K562 (cell line): ENCODE measurements at regions of chr21 and their contacts with region 1.

Region 1: DNA sequence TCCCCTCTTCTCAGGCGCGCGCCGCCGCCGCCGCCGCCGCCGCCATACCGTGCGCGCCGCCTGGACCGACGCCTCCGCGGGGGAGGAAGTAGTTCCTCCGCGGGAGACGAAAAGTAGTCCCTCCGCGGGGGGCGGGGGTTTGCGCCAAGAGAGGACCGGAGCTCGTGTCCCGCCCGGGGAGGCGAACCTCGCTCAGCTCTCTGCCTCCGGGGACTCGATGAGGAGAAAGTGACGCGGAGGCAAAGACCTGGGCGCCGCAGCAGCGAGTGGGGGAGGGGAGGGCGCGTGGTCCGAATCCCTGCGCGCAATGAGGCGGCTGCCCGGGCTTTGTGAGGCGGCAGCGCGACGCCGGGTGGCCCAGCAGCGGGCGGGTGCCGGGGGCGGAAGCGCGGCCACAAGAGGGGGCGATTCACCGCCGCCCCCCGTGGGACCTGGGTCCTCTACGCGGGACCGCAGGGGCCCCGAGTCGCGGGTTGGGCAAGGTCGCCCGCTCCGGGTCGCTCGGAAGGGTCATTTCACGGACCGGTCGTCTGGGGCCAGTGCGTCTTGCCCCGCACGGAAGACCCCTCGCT is at the start of gene BRWD1:
- DNase-seq: peak; percentile 91 to 93 (median 92)
- ATAC-seq: peak; percentile 71
- H3K4me3 ChIP-seq: peak within 1 kb of the TSS; percentile 62
- H3K27ac ChIP-seq: peak within 1 kb of the TSS; percentile 97
- H3K4me1 ChIP-seq: peaks cover 29 to 42% of the 10 kb centered on the region in 2 experiments
- H3K27me3 ChIP-seq: no peaks in the 10 kb centered on the region
- CTCF ChIP-seq: peak; percentile 54 to 76 (median 71)
- EP300 ChIP-seq: peak; percentile 43
- POLR2A ChIP-seq: peak; percentile 89
- RAD21 ChIP-seq: peak; percentile 75 to 83
- polyA plus RNA-seq, gene BRWD1: 10.1 to 11.2 TPM

Region 2: GRCh38 chr21:39183237-39184007 is 130.2 kb before region 1 on chr21 and contains the start of gene PSMG1:
- CTCF ChIA-PET with region 1: no interaction called
- POLR2A ChIA-PET with region 1: interaction called, 6 read pairs
- in situ Hi-C with region 1: no loop called
- intact Hi-C with region 1: loop called (anchors 10 kb)
- DNase-seq: peak; percentile 95 to 99 (median 96)
- ATAC-seq: peak; percentile 92
- H3K4me3 ChIP-seq: peak within 1 kb of the TSS; percentile 82
- H3K27ac ChIP-seq: peak within 1 kb of the TSS; percentile 93
- H3K4me1 ChIP-seq: peaks cover 8 to 11% of the 10 kb centered on the region in 2 experiments; a peak in 4 of 5 replicates
- H3K27me3 ChIP-seq: no peaks in the 10 kb centered on the region
- CTCF ChIP-seq: no peak
- EP300 ChIP-seq: no peak
- POLR2A ChIP-seq: peak; percentile 97
- RAD21 ChIP-seq: no peak
- polyA plus RNA-seq, gene PSMG1: 54.5 to 88.1 TPM

Region 3: GRCh38 chr21:39217356-39218081 is 96.1 kb before region 1 on chr21:
- CTCF ChIA-PET with region 1: no interaction called
- POLR2A ChIA-PET with region 1: no interaction called
- in situ Hi-C with region 1: no loop called
- intact Hi-C with region 1: no loop called
- DNase-seq: no peak
- ATAC-seq: no peak
- H3K4me3 ChIP-seq: no peak overlapping the region
- H3K27ac ChIP-seq: no peak overlapping the region
- H3K4me1 ChIP-seq: no peaks in the 10 kb centered on the region
- H3K27me3 ChIP-seq: no peaks in the 10 kb centered on the region
- CTCF ChIP-seq: no peak
- EP300 ChIP-seq: no peak
- POLR2A ChIP-seq: no peak
- RAD21 ChIP-seq: no peak

Region 4: DNA sequence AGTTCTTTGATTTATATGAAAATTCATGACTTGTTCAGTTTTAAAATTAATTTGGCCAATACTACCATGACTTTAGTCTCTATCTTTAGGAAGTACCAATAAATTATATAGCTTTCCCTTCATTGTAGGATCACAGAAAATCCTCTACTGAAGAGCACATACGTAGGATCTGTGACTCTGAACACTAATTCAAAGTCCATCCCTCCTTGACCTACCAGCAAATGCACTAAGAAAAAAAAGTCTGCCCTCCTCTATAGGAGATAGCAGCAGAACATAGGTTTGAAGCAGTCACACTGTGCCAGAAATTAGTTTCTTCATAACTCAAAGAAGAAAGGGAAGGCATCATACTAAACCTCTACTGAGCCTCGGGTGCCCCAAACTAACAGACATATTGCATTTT is 16.8 kb before region 1 on chr21:
- CTCF ChIA-PET with region 1: no interaction called
- POLR2A ChIA-PET with region 1: interaction called, 17 read pairs
- in situ Hi-C with region 1: no loop called
- intact Hi-C with region 1: no loop called
- DNase-seq: no peak
- ATAC-seq: no peak
- H3K4me3 ChIP-seq: no peak overlapping the region
- H3K27ac ChIP-seq: no peak overlapping the region
- H3K4me1 ChIP-seq: no peaks in the 10 kb centered on the region
- H3K27me3 ChIP-seq: no peaks in the 10 kb centered on the region
- CTCF ChIP-seq: no peak
- EP300 ChIP-seq: no peak
- POLR2A ChIP-seq: no peak
- RAD21 ChIP-seq: no peak

Region 5: DNA sequence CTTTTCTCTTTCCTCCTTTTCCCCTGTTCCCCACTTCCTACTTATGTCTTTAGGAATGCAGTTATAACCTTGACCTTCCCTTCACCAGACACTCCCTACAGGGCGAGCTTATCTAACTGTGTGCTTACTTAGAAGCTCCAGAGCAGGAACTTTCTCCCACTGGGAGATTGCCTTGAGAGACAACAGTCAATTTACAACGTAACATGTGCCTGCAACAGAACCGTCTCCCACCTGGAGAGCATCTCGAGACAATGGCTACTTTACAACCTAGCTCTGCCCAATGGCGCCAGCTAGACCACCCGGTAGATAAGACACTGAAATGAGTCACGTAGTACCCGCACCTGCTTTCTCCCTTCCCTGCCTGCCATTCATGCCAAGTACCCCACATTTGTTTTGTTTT is 18.5 kb after region 1 on chr21:
- CTCF ChIA-PET with region 1: no interaction called
- POLR2A ChIA-PET with region 1: interaction called, 21 read pairs
- in situ Hi-C with region 1: no loop called
- intact Hi-C with region 1: no loop called
- DNase-seq: no peak
- ATAC-seq: peak; percentile 69
- H3K4me3 ChIP-seq: no peak overlapping the region
- H3K27ac ChIP-seq: no peak overlapping the region
- H3K4me1 ChIP-seq: peaks cover 6 to 9% of the 10 kb centered on the region in 2 experiments; a peak in 4 of 5 replicates
- H3K27me3 ChIP-seq: no peaks in the 10 kb centered on the region
- CTCF ChIP-seq: no peak
- EP300 ChIP-seq: peak; percentile 23; the same call in 1 of the 2 replicates
- POLR2A ChIP-seq: no peak
- RAD21 ChIP-seq: 0 out of 4 replicates have a peak, but pooled peaks of 1 of the 2 experiments have one; percentile 2

Region 6: GRCh38 chr21:39349211-39350093 is 35.8 kb after region 1 on chr21:
- CTCF ChIA-PET with region 1: no interaction called
- POLR2A ChIA-PET with region 1: interaction called, 73 read pairs
- in situ Hi-C with region 1: no loop called
- intact Hi-C with region 1: loop called (anchors 2 kb)
- DNase-seq: peak; percentile 99 to 100 (median 100)
- ATAC-seq: peak; percentile 93
- H3K4me3 ChIP-seq: peak overlapping the region; percentile 68
- H3K27ac ChIP-seq: peak overlapping the region; percentile 94
- H3K4me1 ChIP-seq: peaks cover 5 to 30% of the 10 kb centered on the region in 2 experiments
- H3K27me3 ChIP-seq: no peaks in the 10 kb centered on the region
- CTCF ChIP-seq: no peak; a peak in 1 of 6 replicates
- EP300 ChIP-seq: no peak
- POLR2A ChIP-seq: peak; percentile 97
- RAD21 ChIP-seq: peak; percentile 13 to 19; a peak in 3 of 4 replicates

Region 7: GRCh38 chr21:39379986-39380891 is 66.6 kb after region 1 on chr21:
- CTCF ChIA-PET with region 1: no interaction called
- POLR2A ChIA-PET with region 1: interaction called, 10 read pairs
- in situ Hi-C with region 1: loop called (anchors 5 kb)
- intact Hi-C with region 1: no loop called
- DNase-seq: peak; percentile 96 to 99 (median 98)
- ATAC-seq: peak; percentile 98
- H3K4me3 ChIP-seq: peak overlapping the region; percentile 71
- H3K27ac ChIP-seq: peak overlapping the region; percentile 66
- H3K4me1 ChIP-seq: peaks cover 14 to 24% of the 10 kb centered on the region in 2 experiments
- H3K27me3 ChIP-seq: no peaks in the 10 kb centered on the region
- CTCF ChIP-seq: 0 out of 6 replicates have a peak, but pooled peaks of 1 of the 3 experiments have one; percentile 3
- EP300 ChIP-seq: no peak
- POLR2A ChIP-seq: peak; percentile 78
- RAD21 ChIP-seq: peak in 1 of 2 experiments; percentile 12; a peak in 2 of 4 replicates

Region 8: GRCh38 chr21:39445321-39446269 is 131.9 kb after region 1 on chr21 and contains the start of gene LCA5L:
- CTCF ChIA-PET with region 1: interaction called, 3 read pairs
- POLR2A ChIA-PET with region 1: interaction called, 4 read pairs
- in situ Hi-C with region 1: no loop called
- intact Hi-C with region 1: loop called (anchors 2 kb)
- DNase-seq: peak; percentile 97 to 100 (median 100)
- ATAC-seq: peak; percentile 89
- H3K4me3 ChIP-seq: peak within 1 kb of the TSS; percentile 87
- H3K27ac ChIP-seq: peak within 1 kb of the TSS; percentile 95
- H3K4me1 ChIP-seq: peaks cover 25% of the 10 kb centered on the region in 2 experiments
- H3K27me3 ChIP-seq: no peaks in the 10 kb centered on the region
- CTCF ChIP-seq: peak; percentile 9 to 15 (median 10); a peak in 3 of 6 replicates
- EP300 ChIP-seq: 0 out of 2 replicates have a peak, but pooled peaks have one; percentile 2
- POLR2A ChIP-seq: peak; percentile 92
- RAD21 ChIP-seq: peak in 1 of 2 experiments; percentile 8; a peak in 1 of 4 replicates
- polyA plus RNA-seq, gene LCA5L: 4.2 to 4.9 TPM